Activated CD4-positive, alpha-beta T cell treated with anti-CD3 and anti-CD28 coated beads, Interleukin-2, amount 10 ng/mL, durations not matched to agents 24 days and 14 days (primary cell): ENCODE measurements at regions of chr2 and their contacts with region 1.

Region 1: DNA sequence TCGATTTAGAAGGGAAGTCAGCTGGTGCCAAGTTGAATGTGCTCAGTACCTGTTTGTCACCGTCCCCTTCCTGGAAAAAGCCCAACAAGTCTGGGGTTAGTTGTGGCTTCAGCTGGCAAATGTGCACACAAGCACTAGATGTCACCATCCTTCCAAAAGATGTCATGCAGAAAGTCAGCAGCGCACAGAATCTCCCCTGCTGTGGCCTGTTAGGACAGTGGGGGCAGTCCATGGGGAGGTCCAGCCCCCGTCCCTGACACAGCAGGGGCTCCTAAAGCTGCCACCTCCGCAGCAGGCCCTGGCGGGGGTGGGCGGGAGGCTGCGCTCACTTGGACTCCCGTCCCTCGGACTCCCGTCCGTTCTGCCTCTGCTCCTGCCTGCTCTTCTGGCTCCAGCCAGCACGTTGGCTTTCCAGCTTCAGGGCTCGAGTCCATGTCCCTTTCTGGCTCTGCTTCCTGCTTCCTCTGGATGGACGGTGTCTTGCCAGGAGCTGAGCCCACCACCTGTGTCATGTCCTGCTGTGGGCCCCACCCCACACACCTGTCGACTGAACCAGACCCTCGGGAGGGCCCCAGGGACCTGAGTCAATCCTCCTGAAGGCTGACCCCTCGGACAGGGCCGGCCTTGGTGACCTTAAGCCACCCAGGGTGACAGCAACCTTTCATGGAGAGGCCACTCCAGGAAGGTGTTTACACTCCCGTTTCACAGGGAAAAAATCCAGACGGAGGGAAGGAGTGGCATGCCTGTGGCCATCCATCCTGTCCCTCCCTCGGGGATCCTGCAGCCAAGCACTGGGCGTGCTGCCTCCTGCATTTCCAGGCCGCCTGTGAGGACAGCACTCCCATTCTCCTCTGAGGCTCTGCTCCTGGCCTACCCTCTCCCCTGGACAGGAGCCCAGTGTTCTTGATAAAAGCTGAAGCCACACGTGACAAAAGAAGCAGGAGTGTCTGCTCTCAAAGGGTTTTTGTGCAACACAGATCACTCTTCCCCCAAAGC is 8.5 kb downstream of the RAB17 start:
- DNase-seq: peak; percentile 82
- H3K4me3 Mint-ChIP-seq: no peak overlapping the region
- H3K27ac Mint-ChIP-seq: peak overlapping the region; percentile 37
- H3K4me1 Mint-ChIP-seq: peaks cover 4% of the 10 kb centered on the region
- H3K27me3 Mint-ChIP-seq: no peaks in the 10 kb centered on the region

Region 2: DNA sequence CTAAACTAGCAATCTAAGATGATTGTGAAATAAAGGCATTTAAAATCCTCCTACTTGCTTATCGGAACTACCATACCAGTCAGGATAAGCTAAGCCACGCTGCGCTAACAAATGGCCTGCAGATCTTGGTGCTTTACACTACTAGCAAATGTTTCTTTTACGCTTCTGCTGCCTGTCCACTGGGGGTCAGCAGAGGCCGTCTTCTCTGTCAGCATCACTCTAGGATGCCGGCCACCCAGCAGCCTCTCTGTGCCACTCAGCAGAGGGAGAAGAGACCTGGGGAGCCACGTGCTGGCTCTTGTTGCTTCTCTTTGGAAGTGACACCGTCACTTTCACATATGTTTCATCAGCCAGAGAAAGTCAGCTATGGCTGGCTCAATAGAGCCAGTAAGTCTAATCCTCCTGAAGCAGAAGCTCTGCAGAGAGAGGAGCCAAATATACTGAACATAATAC is 459.8 kb before region 1 on chr2:
- intact Hi-C with region 1: no loop called
- DNase-seq: peak; percentile 78
- H3K4me3 Mint-ChIP-seq: no peak overlapping the region
- H3K27ac Mint-ChIP-seq: peak overlapping the region; percentile 30
- H3K4me1 Mint-ChIP-seq: peaks cover 3% of the 10 kb centered on the region
- H3K27me3 Mint-ChIP-seq: peaks cover 2% of the 10 kb centered on the region

Region 3: GRCh38 chr2:237744613-237745249 is 162.7 kb after region 1 on chr2:
- intact Hi-C with region 1: loop called (anchors 5 kb)
- DNase-seq: peak; percentile 94
- H3K4me3 Mint-ChIP-seq: no peak overlapping the region
- H3K27ac Mint-ChIP-seq: peak overlapping the region; percentile 80
- H3K4me1 Mint-ChIP-seq: peaks cover 29% of the 10 kb centered on the region
- H3K27me3 Mint-ChIP-seq: no peaks in the 10 kb centered on the region

Region 4: GRCh38 chr2:237774802-237775553 is 192.9 kb after region 1 on chr2:
- intact Hi-C with region 1: loop called (anchors 2 kb)
- DNase-seq: peak; percentile 83
- H3K4me3 Mint-ChIP-seq: no peak overlapping the region
- H3K27ac Mint-ChIP-seq: no peak overlapping the region
- H3K4me1 Mint-ChIP-seq: peaks cover 2% of the 10 kb centered on the region
- H3K27me3 Mint-ChIP-seq: no peaks in the 10 kb centered on the region